Activated CD4-positive, alpha-beta memory T cell treated with anti-CD3 and anti-CD28 coated beads, Interleukin-2, amount 10 ng/mL, durations not matched to agents 7 days and 5 days (primary cell): ENCODE measurements at regions of chr1 and their contacts with region 1.

Region 1: GRCh38 chr1:27489910-27490741 is at the start of gene WASF2:
- DNase-seq: peak; percentile 98
- H3K4me3 Mint-ChIP-seq: peak within 1 kb of the TSS; percentile 94
- H3K27ac Mint-ChIP-seq: peak within 1 kb of the TSS; percentile 96
- H3K4me1 Mint-ChIP-seq: peaks cover 42% of the 10 kb centered on the region
- H3K27me3 Mint-ChIP-seq: no peaks in the 10 kb centered on the region
- total RNA-seq, gene WASF2: 150 TPM

Region 2: GRCh38 chr1:27192039-27192529 is 298.0 kb before region 1 on chr1:
- CTCF ChIA-PET with region 1: no interaction called
- POLR2A ChIA-PET with region 1: no interaction called
- DNase-seq: no peak
- H3K4me3 Mint-ChIP-seq: no peak overlapping the region
- H3K27ac Mint-ChIP-seq: no peak overlapping the region
- H3K4me1 Mint-ChIP-seq: no peaks in the 10 kb centered on the region
- H3K27me3 Mint-ChIP-seq: peaks cover 10% of the 10 kb centered on the region

Region 3: DNA sequence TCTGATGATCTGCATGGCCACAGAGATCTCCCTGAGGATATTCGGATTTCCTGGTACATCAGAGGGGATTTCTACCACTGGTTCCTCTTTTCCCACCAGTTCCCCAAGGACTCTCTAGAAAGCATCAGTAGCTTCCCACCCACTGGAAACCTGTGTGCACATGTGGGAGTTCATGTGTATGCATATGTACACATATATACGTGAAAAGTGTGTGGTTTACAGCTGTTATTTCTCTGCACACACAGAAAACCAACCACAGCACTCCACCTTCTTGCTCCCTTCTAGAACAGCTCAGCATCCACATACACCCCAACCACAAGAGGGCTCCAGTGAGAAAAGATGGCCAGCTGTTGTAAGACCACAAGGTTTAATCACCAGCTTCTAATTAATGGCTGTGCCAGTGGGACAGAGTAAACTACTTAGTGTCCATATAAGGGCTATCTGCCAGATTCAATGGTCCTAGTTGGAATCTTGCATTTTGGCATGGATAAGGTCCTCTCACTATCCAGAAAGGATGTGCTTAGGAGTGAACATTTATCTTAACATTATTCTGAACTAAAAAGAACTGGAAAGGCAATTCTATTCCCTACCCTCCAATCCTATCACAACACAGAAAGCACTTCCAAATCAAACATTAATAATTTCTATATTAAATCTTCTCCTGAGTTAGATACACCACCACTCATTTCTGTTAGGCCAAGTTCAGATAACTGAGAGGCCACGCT is 73.6 kb before region 1 on chr1:
- CTCF ChIA-PET with region 1: interaction called, 14 read pairs
- POLR2A ChIA-PET with region 1: interaction called, 19 read pairs
- DNase-seq: peak; percentile 63
- H3K4me3 Mint-ChIP-seq: no peak overlapping the region
- H3K27ac Mint-ChIP-seq: peak overlapping the region; percentile 25
- H3K4me1 Mint-ChIP-seq: peaks cover 43% of the 10 kb centered on the region
- H3K27me3 Mint-ChIP-seq: no peaks in the 10 kb centered on the region

Region 4: DNA sequence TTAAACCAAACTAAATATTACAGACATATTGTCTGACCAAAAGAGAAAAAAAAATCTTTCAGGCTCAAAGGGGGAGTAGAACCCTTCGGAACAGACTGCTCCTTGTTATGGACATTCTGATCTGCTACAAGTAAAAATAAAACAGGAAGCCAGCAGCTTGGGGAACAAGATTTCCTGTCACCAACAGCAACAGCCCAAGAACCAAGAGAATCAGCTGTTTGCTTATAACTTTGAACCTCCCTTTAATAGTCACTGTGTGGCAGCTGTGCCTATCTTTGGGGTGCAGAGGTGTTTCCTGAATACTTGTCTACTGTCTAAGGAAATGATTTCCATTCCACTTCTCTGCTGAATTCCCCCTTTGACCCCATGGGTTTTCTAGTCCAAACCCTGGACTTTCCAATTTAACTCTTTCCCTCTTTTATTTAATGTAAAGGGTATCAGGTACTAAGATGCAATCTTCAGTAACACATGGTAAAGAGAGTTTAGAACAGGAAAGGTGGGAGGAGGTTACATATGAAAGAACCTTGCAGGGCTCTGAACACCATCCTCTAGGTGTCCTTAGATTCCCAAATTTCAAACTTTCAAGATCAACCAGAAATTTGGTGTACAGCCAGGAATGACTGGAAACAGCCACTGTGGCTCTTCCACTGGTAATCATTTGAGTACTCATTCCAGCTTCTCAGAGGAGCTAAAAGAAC is 59.1 kb before region 1 on chr1:
- CTCF ChIA-PET with region 1: interaction called, 4 read pairs
- POLR2A ChIA-PET with region 1: interaction called, 33 read pairs
- DNase-seq: peak; percentile 35
- H3K4me3 Mint-ChIP-seq: peak overlapping the region; percentile 43
- H3K27ac Mint-ChIP-seq: peak overlapping the region; percentile 70
- H3K4me1 Mint-ChIP-seq: peaks cover 69% of the 10 kb centered on the region
- H3K27me3 Mint-ChIP-seq: no peaks in the 10 kb centered on the region

Region 5: DNA sequence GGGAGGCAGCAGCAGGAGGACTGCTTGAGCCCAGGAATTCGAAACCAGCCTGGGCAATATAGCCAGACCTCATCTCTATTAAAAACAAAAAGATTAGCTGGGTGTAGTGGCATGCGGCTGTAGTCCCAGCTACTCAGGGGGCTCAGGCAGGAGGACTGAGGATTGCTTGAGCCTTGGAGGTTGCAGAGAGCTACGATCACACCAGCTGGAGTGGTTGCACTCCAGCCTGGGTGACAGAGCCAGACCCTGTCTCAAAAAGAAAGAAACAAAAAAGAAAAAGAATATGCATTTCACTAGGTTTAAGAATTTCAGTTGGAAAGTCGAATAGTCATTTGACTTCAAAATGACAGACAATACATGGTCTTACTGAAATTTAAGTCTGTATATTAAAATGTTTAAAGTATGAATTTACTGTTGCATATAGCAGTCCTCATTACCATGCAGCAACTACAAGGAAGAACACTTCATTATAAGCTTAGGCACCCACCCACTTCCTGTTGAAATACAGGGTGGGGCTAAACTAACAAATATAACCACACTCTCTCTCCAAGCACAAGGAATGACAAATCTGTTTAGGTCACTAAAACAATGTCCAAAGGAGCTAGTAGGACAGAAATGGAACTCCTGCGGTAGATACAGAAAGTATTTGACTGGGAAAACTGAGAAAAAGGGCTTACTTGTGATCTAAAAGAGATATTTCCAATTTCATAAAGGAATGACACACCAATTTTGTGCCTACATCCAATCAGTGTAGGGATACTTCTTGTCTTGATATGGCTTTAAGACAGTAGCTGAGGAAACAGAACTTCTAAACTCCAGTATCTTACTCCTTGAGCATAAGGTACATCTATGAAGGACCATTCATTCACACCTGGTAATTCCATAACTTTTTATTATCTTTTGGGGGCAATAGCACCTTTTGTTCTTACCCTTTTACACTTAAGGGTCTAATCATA is 53.6 kb before region 1 on chr1:
- CTCF ChIA-PET with region 1: no interaction called
- POLR2A ChIA-PET with region 1: interaction called, 33 read pairs
- DNase-seq: no peak
- H3K4me3 Mint-ChIP-seq: peak overlapping the region; percentile 47
- H3K27ac Mint-ChIP-seq: peak overlapping the region; percentile 69
- H3K4me1 Mint-ChIP-seq: peaks cover 59% of the 10 kb centered on the region
- H3K27me3 Mint-ChIP-seq: no peaks in the 10 kb centered on the region

Region 6: DNA sequence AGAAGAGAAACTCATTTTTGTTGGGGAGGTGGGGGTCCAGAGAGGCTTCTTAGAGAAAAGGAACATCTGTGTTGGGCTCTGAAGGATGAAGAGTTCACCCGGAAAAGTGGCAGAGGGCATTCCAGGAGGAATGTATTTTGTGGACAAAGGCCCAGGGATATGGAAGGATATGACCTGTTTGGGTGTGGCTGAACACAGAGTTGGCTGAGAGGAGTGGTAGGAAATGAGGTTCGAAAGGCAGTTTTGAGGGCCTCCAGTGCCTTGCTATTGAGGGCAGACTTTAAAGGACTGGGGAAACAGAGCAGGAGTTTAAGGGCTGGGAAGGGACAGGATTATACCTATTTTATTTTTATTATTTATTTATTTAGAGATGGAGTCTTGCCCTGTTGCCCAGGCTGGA is 27.2 kb after region 1 on chr1:
- CTCF ChIA-PET with region 1: interaction called, 3 read pairs
- POLR2A ChIA-PET with region 1: interaction called, 43 read pairs
- DNase-seq: no peak
- H3K4me3 Mint-ChIP-seq: no peak overlapping the region
- H3K27ac Mint-ChIP-seq: no peak overlapping the region
- H3K4me1 Mint-ChIP-seq: peaks cover 32% of the 10 kb centered on the region
- H3K27me3 Mint-ChIP-seq: no peaks in the 10 kb centered on the region

Region 7: GRCh38 chr1:27525296-27526272 is 35.5 kb after region 1 on chr1:
- CTCF ChIA-PET with region 1: interaction called, 4 read pairs
- POLR2A ChIA-PET with region 1: interaction called, 43 read pairs
- DNase-seq: peak; percentile 73
- H3K4me3 Mint-ChIP-seq: peak overlapping the region; percentile 68
- H3K27ac Mint-ChIP-seq: peak overlapping the region; percentile 61
- H3K4me1 Mint-ChIP-seq: peaks cover 70% of the 10 kb centered on the region
- H3K27me3 Mint-ChIP-seq: peaks cover 4% of the 10 kb centered on the region